Posterior vena cava (tissue), 2 donors: ENCODE measurements at regions of chrX and their contacts with region 1.

Region 1: DNA sequence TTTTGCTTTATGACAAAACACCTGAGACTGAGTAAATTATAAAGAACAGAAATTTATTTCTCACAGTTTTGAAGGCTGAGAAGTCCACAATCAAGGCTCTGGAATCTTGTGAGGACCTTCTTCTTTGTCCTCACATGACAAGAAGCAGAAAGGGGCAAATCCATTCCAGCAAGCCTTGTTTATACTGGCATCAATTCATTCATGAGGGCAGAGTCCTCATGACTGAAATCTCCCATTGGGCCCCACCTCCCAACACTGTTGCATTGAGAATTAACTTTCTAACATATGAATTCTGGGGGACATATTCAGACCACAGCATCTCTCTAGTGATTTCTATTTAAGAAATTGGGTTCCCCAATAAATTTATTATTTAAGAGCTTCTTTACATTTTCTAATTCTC is 395.4 kb downstream of the AR start:
- DNase-seq: no peak

Region 2: DNA sequence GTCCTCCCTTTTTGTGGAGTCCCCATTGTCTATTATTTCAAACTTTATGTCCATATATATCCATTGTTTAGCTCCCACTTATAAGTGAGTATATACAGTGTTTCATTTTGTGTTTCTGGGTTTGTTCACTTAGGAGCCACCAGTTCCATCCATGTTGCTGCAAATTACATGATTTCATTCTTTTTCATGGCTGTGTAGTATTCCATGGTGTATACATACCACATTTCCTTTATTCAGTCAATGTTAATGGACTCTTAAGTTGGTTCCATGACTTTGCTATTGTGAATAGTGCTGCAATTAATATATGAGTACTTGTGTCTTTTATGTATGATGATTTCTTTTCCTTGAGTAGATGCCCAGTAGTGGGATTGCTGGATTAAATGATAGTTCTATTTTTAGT is 66.3 kb before region 1 on chrX:
- intact Hi-C with region 1: loop called in 1 of 2 experiments (anchors 2 kb)
- DNase-seq: no peak

Region 3: DNA sequence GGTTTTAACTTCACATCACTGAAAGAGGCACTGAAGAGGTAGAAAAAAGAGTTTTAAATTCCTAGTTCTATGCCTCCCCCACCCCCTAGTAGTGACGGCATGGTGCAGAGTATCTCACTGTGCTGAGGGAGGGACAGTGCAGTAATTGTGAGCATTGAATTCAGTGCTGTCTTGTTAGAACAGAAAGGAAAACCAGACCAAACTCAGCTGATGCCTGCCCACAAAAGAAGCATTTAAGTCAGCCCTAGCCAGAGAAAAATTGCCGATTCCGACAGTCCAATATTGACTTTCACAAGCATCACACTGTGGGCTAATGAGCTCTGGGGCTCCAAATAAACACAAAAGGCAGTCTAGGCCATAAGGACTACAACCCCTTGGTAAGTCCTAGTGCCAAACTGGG is 22.2 kb after region 1 on chrX:
- intact Hi-C with region 1: no loop called
- DNase-seq: no peak

Region 4: GRCh38 chrX:68114573-68115129 is 175.4 kb after region 1 on chrX:
- intact Hi-C with region 1: no loop called
- DNase-seq: no peak